CD4-positive, alpha-beta T cell (primary cell): ENCODE measurements at regions of chr17 and their contacts with region 1.

Region 1: DNA sequence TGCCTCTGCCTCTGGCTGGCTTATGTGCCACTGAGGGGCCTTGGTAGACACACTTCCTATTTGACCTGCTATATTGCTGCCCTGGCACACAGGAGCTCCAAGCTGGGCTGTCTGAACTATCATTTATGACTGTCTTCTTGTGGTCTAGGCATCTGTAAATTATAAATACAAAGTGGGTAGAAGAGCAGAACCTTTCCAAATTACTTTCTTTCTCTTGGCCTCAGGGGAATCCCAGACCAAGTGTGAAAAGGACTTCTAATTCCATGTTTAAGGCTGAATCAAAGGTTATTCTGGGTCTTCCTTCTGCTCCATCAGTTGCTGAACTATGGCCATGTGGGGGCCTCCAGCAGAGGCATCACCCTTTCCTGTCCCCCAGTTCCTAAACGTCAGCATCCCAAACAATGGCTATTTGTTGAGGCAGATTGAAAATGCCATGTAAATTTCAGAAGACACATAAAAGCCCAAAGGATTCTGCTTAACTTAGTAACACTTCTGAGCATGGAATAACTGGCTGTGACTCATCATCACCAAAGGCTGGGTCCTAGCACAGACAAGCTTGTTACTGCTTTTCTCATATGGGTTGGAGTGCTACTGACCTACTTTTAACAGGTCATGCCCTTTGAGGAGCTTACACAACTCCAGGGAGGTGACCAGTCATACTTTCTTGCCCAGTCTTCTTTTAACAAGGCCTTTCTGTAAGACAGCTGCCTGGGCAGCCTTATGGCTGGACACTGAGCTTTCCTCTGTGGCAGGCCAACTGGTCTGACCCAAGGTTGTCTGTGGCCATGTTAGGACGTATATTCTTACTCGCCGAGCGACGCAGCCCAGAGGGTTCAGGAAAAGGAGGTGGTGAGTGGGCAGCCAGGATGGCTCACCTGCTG is 154.8 kb downstream of the VPS53 start:
- DNase-seq: peak in 2 of 14 experiments; percentile 41 to 57
- ATAC-seq: no peak
- H3K4me3 ChIP-seq: no peak overlapping the region
- H3K4me3 Mint-ChIP-seq: no peak overlapping the region
- H3K27ac ChIP-seq: no peak overlapping the region
- H3K27ac Mint-ChIP-seq: no peak overlapping the region
- H3K4me1 ChIP-seq: no peaks in the 10 kb centered on the region
- H3K4me1 Mint-ChIP-seq: no peaks in the 10 kb centered on the region
- H3K27me3 ChIP-seq: no peaks in the 10 kb centered on the region
- H3K27me3 Mint-ChIP-seq: no peaks in the 10 kb centered on the region
- CTCF ChIP-seq: no peak

Region 2: DNA sequence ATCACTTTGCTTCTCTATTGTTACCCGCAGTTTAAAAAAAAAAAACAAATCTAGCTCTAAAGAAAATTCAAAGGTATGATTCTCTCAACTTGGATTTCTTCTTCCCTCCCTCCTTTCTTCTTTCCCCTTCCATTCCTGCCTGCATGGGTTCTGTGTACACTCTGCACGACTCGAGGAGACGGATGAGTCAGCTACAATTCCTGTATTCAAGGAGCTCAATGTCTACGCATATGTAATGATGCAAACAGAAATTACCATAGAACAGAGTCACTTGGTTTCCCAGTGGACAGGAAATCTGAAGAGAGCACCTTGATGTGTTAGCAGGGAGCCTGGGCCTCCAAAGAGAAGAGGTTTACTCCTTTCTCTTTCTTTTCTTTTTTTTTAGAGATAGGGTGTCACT is 62.6 kb after region 1 on chr17:
- CTCF ChIA-PET with region 1: no interaction called
- POLR2A ChIA-PET with region 1: no interaction called
- intact Hi-C with region 1: loop called in 1 of 2 experiments (anchors 10 kb)
- DNase-seq: no peak
- ATAC-seq: no peak
- H3K4me3 ChIP-seq: no peak overlapping the region
- H3K4me3 Mint-ChIP-seq: no peak overlapping the region
- H3K27ac ChIP-seq: no peak overlapping the region
- H3K27ac Mint-ChIP-seq: no peak overlapping the region
- H3K4me1 ChIP-seq: no peaks in the 10 kb centered on the region
- H3K4me1 Mint-ChIP-seq: no peaks in the 10 kb centered on the region
- H3K27me3 ChIP-seq: no peaks in the 10 kb centered on the region
- H3K27me3 Mint-ChIP-seq: no peaks in the 10 kb centered on the region
- CTCF ChIP-seq: no peak

Region 3: DNA sequence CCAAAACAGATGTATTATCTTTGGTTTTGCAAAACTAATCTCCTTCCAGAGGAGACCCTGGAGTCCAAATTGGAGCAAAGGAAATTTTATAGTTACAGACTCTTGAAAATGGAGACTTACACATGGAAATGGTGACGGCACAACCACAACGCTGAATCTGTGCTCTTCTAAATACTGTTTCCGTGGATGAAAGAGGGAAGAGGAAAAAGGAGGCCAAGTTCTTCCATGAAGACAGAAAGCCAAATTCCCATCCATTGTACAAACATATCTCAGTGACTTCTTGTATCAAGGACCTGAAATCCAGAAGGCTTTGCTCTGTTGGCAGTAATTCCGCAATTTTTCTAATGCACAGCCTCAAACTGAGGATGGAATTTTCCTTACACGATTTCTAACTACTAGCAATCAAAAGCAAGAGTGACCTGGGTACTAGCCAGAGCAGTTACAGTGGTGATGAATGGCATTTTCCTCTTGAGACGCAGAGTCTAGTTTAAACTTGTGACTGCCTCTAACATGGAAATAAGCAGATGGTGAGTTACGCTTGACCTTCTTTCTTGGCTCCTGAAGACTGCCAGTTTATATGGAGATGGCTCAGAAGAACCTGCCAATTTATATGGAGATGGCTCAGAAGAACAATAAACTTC is 116.4 kb after region 1 on chr17:
- CTCF ChIA-PET with region 1: no interaction called
- POLR2A ChIA-PET with region 1: no interaction called
- intact Hi-C with region 1: loop called in 1 of 2 experiments (anchors 10 kb)
- DNase-seq: no peak
- ATAC-seq: no peak
- H3K4me3 ChIP-seq: no peak overlapping the region
- H3K4me3 Mint-ChIP-seq: no peak overlapping the region
- H3K27ac ChIP-seq: no peak overlapping the region
- H3K27ac Mint-ChIP-seq: no peak overlapping the region
- H3K4me1 ChIP-seq: no peaks in the 10 kb centered on the region
- H3K4me1 Mint-ChIP-seq: peaks cover 9% of the 10 kb centered on the region
- H3K27me3 ChIP-seq: no peaks in the 10 kb centered on the region
- H3K27me3 Mint-ChIP-seq: no peaks in the 10 kb centered on the region
- CTCF ChIP-seq: no peak